ENCODE measurements at regions of chr11 and their contacts with region 1.

Region 1: DNA sequence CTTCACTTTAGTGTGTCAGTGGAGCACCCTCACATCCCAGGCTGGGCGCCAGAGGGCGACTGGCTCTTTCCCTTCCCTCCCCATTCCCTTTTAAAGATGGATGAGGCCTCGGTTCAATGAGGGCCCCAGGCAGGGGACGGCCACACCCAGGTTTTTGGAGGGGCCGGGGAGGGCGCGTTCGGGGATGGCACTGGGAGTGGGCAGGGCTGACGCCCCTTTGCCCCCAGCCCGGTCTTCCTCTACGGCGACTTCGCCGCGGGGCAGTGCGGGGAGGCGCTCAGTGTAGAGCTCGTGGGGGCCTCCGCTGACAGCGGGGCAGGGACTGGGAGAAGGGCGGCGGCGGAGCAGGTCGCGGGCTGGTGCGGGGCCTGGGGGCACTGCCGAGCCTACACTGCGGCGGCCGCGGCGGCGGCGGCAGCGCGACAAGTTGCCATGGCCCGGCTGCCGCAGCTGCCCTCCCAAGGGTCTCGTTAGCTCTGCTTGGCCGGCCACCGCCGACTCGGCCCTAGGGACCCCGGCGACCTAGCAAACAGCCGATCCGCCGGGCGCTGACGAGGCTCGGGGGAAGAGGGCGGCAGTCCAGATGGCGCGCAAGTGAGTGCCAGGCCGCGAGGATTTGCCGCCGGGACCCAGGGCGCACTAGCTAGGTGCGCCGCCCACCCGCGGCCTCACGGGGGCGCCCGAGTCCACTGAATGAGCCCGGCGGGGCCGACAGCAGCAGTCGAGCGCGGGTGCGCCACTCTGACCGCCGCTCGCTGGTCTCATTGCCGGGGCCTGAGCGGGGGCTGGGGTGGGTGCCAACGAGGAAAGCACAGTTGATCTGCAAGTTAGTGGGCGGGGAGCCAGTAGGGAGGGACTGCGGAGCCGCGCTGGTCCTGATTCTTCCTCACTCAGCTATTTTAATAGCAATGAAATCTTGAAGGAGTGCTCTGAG is 92.7 kb downstream of the RRM1 start:
- DNase-seq: peak; percentile 80
- H3K4me3 Mint-ChIP-seq: peak overlapping the region; percentile 84
- H3K27ac Mint-ChIP-seq: no peak overlapping the region
- H3K4me1 Mint-ChIP-seq: peaks cover 13% of the 10 kb centered on the region
- H3K27me3 Mint-ChIP-seq: peaks cover 9% of the 10 kb centered on the region

Region 2: GRCh38 chr11:4118107-4118506 is 69.2 kb before region 1 on chr11:
- intact Hi-C with region 1: no loop called
- DNase-seq: no peak
- H3K4me3 Mint-ChIP-seq: no peak overlapping the region
- H3K27ac Mint-ChIP-seq: peak overlapping the region; percentile 63
- H3K4me1 Mint-ChIP-seq: peaks cover 21% of the 10 kb centered on the region
- H3K27me3 Mint-ChIP-seq: no peaks in the 10 kb centered on the region

Region 3: GRCh38 chr11:4393209-4393857 is 206.0 kb after region 1 on chr11 and contains the start of gene TRIM21:
- intact Hi-C with region 1: loop called (anchors 5 kb)
- DNase-seq: peak; percentile 88
- H3K4me3 Mint-ChIP-seq: peak within 1 kb of the TSS; percentile 89
- H3K27ac Mint-ChIP-seq: peak within 1 kb of the TSS; percentile 87
- H3K4me1 Mint-ChIP-seq: peaks cover 43% of the 10 kb centered on the region
- H3K27me3 Mint-ChIP-seq: no peaks in the 10 kb centered on the region
- total RNA-seq, gene TRIM21: 28.8 and 31.6 TPM in 2 replicates

Region 4: GRCh38 chr11:4493480-4493818 is 306.1 kb after region 1 on chr11:
- intact Hi-C with region 1: loop called (anchors 1 kb)
- DNase-seq: no peak
- H3K4me3 Mint-ChIP-seq: no peak overlapping the region
- H3K27ac Mint-ChIP-seq: no peak overlapping the region
- H3K4me1 Mint-ChIP-seq: no peaks in the 10 kb centered on the region
- H3K27me3 Mint-ChIP-seq: peaks cover 24% of the 10 kb centered on the region

Region 5: DNA sequence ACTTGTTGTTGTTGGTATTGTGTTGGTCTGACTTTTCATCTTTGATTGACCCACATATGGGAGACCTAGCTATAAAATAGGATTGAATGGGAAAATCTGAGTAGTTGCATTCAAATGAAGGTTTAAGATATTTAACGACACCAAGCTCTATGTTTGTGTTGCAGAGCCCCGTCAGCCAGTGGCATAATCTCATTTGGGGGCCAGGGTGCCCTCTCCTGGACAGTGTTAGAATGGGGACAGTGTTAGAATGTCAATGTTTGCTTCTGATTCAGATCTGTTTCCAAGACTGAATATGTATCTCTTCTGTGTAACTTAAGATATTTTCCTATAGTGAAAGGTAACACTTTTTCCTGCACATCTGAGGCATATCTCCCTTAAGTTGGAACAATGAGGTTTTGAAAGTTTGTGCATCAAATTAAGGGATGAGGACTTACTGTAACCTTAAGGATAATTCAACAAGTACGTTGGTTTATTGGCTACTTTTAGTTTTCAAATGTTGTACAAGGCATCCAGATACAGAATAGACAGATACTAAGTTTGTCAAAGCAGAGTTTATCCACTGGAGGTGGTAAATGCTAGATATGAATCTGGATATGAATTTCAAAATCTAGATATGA is 352.4 kb after region 1 on chr11:
- intact Hi-C with region 1: loop called (anchors 1 kb)
- DNase-seq: peak; percentile 11
- H3K4me3 Mint-ChIP-seq: no peak overlapping the region
- H3K27ac Mint-ChIP-seq: no peak overlapping the region
- H3K4me1 Mint-ChIP-seq: no peaks in the 10 kb centered on the region
- H3K27me3 Mint-ChIP-seq: peaks cover 12% of the 10 kb centered on the region

Region 6: DNA sequence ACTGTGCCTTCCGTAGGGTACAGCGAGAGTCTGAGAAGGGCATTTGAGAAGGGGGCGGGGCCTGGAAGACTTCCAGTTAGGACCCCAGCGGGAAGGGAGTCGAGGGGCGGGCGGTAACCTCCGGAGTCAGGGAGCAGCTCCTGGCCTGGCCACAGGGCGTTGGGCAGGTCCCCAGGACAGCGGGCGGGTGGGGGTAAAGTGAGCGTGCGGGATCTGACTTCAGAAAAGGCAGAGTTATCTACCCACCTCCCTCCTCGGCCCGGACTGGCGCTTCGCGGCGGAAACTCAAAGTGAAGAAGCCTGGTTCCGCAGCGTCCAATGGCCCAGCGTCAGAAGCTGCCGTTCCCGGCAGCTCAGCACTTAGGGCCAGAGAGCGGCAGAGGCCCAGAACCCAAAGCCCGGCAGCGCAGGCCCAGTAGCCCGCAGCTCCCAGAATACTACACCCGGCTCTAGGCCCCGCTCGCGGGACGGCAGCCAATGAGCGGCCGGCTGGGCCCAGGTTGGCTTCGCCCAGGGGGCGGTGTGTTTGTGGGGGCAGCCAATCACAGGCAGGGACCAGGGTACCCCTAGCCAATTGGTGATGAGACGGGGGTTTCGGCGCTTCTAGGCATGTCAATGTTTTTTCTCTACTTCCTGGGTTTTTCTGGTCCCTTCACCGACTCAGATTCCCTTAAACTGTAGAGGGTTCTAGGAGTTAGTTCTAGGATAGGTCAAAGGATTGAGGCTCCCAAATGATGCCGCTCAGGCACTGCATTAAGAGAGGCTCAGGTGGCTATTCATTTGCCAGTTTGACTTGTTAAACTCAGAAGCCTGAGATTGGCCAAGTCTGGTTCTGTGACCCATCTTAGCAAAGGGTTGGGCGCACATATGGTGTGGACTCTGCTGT is 420.7 kb after region 1 on chr11 and contains the start of gene TRIM68:
- intact Hi-C with region 1: loop called (anchors 5 kb)
- DNase-seq: peak; percentile 94
- H3K4me3 Mint-ChIP-seq: peak within 1 kb of the TSS; percentile 92
- H3K27ac Mint-ChIP-seq: peak within 1 kb of the TSS; percentile 88
- H3K4me1 Mint-ChIP-seq: peaks cover 46% of the 10 kb centered on the region
- H3K27me3 Mint-ChIP-seq: no peaks in the 10 kb centered on the region
- total RNA-seq, gene TRIM68: 8.2 and 9.4 TPM in 2 replicates

Region 7: GRCh38 chr11:4636962-4637661 is 449.8 kb after region 1 on chr11 and contains the start of gene OR51D1:
- intact Hi-C with region 1: loop called (anchors 1 kb)
- DNase-seq: peak; percentile 52
- H3K4me3 Mint-ChIP-seq: no peak within 1 kb of the TSS
- H3K27ac Mint-ChIP-seq: no peak within 1 kb of the TSS
- H3K4me1 Mint-ChIP-seq: no peaks in the 10 kb centered on the region
- H3K27me3 Mint-ChIP-seq: peaks cover 2% of the 10 kb centered on the region
- total RNA-seq, gene OR51D1: not detected in 2 replicates

Measured in activated T-helper 1 cell treated with anti-CD3 and anti-CD28 coated beads, Interleukin-12 subunit alpha, Interleukin-12 subunit beta, Interleukin-2, Interleukin-4 antibody, amounts not matched to agents 30 ng/mL and 10 ng/mL and 1 ng/mL, durations not matched to agents 14 hours and 24 hours and 36 hours (primary cell).